PC-3 (cell line): ENCODE measurements at regions of chr14 and their contacts with region 1.

Region 1: DNA sequence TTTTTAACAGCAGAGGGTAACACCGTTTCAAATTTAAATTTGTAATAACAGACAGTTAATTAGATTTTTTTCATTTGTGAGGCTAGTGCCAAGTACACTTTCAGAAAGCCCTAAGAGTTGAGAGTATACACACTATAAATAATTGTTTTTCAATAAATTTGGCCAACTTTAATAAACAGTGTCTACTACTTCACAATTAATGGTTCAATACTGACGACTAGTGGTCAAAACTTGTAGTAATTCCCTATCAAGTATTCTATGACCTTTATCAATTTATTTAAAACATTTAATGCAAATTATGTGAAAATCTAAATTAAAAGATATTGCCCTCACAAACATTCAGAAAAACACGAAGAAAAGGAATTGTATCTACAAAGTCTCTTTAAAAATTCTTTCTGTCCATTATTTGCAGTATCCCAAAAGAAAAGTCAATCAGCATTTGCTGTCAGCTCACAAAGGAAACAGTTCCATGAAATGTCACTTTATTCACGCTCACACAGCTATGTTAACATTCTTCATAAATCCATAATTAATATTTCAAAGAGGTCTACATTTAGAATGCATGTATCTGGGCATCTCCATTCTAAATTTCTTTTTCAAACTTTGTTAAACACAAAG is 91.2 kb downstream of the CEP128 start:
- DNase-seq: peak; percentile 71
- ATAC-seq: peak; percentile 45
- H3K4me3 ChIP-seq: no peak overlapping the region
- H3K27ac ChIP-seq: no peak overlapping the region
- H3K4me1 ChIP-seq: peaks cover 22% of the 10 kb centered on the region
- H3K27me3 ChIP-seq: no peaks in the 10 kb centered on the region
- CTCF ChIP-seq: peak; percentile 85

Region 2: DNA sequence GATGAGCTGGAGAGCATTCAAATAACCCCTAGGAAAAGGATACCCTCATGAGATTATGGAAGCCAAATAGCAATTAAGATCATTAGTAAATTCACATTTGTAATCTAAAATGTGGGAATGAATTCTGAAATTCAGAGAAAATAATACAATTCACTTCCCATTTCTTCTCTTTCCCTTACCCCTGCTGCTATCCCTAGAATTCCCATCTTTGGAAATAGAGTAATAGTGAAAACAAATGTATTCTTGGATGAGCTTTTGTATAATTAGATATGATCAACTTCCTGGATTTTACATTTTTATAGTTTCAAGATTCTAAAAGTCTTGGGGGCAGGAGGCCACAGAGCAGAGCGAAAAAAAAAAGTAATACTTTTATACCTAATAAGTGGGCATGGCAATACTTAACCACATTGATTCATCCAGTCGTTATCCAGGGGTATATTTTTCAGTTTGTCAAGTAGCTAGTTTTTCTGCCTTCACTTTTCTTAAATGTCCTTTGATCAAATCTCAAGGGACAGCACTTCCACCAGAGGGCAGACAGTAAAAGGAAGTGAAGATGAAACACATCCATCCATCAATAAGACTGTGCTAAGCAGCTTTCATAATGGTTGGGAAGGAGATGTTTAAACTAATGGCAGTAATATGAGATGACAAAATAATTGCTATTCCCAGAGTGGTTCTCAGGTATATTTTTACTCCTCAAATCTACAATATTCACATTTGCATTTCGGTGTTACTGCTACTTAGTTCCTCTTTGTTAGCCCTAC is 1040.3 kb before region 1 on chr14:
- CTCF ChIA-PET with region 1: no interaction called
- POLR2A ChIA-PET with region 1: no interaction called
- intact Hi-C with region 1: loop called (anchors 1 kb)
- DNase-seq: peak; percentile 64
- ATAC-seq: peak; percentile 67
- H3K4me3 ChIP-seq: no peak overlapping the region
- H3K27ac ChIP-seq: no peak overlapping the region
- H3K4me1 ChIP-seq: no peaks in the 10 kb centered on the region
- H3K27me3 ChIP-seq: no peaks in the 10 kb centered on the region
- CTCF ChIP-seq: peak; percentile 71

Region 3: DNA sequence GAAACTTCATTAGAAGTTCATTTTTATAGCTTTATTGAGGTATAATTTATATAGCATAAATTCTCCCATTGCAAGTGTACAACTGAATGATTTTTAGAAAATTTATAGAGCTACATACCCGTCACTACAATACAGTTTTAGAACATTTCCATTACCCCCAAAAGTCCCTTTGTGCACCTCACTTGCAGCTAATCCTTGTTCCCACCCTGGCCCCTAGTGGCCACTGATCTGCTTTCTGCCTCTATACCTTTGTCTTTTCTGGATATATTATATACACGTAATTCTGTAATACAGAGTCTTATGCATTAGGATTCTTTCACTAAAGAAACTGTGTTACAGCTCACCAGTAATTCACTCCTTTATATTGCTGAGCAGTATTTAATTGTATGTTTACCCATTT is 493.9 kb before region 1 on chr14:
- CTCF ChIA-PET with region 1: no interaction called
- POLR2A ChIA-PET with region 1: no interaction called
- intact Hi-C with region 1: loop called (anchors 10 kb)
- DNase-seq: peak; percentile 49
- ATAC-seq: peak; percentile 54; the same call in 1 of the 2 replicates
- H3K4me3 ChIP-seq: no peak overlapping the region
- H3K27ac ChIP-seq: no peak overlapping the region
- H3K4me1 ChIP-seq: no peaks in the 10 kb centered on the region
- H3K27me3 ChIP-seq: no peaks in the 10 kb centered on the region
- CTCF ChIP-seq: peak; percentile 83

Region 4: DNA sequence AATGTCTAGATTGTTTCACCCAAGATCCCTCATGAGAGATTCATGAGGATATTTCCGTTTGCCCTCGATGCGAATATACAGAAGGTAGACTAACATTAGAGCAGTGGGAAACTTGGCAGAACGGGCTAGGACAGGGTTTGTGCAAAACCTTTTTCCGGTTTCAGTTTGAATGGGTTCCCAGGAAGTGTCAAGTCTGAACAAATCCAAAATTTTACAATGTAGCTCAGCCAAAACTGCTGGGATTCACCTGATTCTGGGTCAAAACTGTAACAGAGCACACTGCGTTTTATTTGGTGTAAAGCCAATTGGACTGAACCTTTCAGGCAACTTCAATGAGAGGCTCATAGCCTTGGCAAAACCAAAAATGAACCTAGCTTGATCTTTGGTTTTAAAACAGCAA is 301.2 kb before region 1 on chr14:
- CTCF ChIA-PET with region 1: no interaction called
- POLR2A ChIA-PET with region 1: no interaction called
- intact Hi-C with region 1: no loop called
- DNase-seq: no peak
- ATAC-seq: no peak
- H3K4me3 ChIP-seq: no peak overlapping the region
- H3K27ac ChIP-seq: no peak overlapping the region
- H3K4me1 ChIP-seq: no peaks in the 10 kb centered on the region
- H3K27me3 ChIP-seq: no peaks in the 10 kb centered on the region
- CTCF ChIP-seq: no peak

Region 5: GRCh38 chr14:80587075-80587724 is 263.1 kb before region 1 on chr14:
- CTCF ChIA-PET with region 1: no interaction called
- POLR2A ChIA-PET with region 1: no interaction called
- intact Hi-C with region 1: loop called (anchors 1 kb)
- DNase-seq: peak; percentile 66
- ATAC-seq: peak; percentile 35; the same call in 1 of the 2 replicates
- H3K4me3 ChIP-seq: no peak overlapping the region
- H3K27ac ChIP-seq: peak overlapping the region; percentile 9; the same call in 1 of the 2 replicates
- H3K4me1 ChIP-seq: peaks cover 36% of the 10 kb centered on the region
- H3K27me3 ChIP-seq: no peaks in the 10 kb centered on the region
- CTCF ChIP-seq: peak; percentile 83

Region 6: DNA sequence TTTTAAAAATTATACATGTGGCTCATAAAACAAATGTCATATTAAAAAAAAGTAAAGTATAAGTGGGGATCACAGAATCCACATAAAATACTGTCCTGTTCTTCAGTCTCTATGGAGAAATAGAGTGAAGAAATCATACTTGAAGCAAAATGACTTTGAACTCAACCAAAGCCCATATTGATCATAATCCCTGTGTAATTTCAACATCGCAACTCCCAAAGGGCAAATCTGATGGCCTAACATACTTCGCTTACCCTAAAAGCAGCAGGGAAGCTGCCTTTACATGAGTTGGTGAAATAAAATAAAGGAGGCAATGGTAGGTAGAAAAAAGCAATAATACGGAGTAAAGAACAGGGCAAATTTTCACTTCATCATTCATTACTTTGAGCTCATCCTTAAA is 10.6 kb before region 1 on chr14:
- CTCF ChIA-PET with region 1: no interaction called
- POLR2A ChIA-PET with region 1: no interaction called
- intact Hi-C with region 1: no loop called
- DNase-seq: no peak
- ATAC-seq: no peak
- H3K4me3 ChIP-seq: no peak overlapping the region
- H3K27ac ChIP-seq: no peak overlapping the region
- H3K4me1 ChIP-seq: peaks cover 13% of the 10 kb centered on the region
- H3K27me3 ChIP-seq: no peaks in the 10 kb centered on the region
- CTCF ChIP-seq: no peak